Dendritic cell treated with granulocyte-macrophage colony-stimulating factor and Interleukin-4, amounts not matched to agents 40 ng/mL and 50 ng/mL, for 4 days (primary cell): ENCODE measurements at regions of chr7 and their contacts with region 1.

Region 1: DNA sequence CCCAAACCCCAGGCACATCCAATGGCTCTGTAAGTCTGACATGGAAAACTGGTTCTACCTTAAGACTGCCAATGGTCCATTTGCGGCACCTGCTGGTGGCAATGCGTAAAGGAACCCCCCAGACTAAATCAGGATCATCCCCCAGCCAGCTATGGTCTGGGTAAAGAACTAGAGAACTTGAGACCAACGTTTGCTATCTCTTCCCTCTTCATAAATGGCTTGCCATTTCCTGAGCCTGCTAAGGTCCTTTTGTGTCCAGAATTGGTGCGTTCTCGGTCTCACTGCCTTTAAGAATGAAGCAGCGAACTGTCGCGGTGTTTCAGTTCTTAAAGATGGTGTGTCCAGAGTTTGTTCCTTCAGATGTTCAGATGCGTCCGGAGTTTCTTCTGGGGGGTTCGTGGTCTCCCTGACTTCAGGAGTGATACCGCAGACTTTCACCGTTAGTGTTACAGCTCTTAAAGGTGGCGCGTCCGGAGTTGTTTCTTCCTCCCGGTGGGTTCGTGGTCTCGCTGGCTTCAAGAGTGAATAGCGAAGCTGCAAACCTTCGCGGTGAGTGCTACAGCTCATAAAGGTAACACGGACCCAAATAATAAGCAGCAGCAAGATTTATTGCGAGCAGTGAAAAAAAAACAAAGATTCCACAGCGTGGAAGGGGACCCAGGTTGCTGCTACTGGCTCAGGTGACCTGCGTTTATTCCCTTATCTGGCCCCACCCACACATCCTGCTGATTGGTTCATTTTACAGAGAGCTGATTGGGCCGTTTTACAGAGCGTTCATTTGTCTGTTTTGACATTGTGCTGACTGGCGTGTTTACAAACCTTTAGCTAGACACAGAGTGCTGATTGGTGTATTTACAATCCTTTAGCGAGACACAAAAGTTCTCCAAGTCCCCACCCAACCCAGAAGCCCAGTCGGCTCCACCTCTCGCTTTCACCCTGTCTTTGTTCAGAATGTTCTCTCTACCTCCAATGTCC is 95.4 kb downstream of the ELMO1 start:
- H3K4me3 Mint-ChIP-seq: peak overlapping the region; percentile 53
- H3K27ac Mint-ChIP-seq: peak overlapping the region; percentile 86
- H3K4me1 Mint-ChIP-seq: peaks cover 97% of the 10 kb centered on the region
- H3K27me3 Mint-ChIP-seq: no peaks in the 10 kb centered on the region

Region 2: DNA sequence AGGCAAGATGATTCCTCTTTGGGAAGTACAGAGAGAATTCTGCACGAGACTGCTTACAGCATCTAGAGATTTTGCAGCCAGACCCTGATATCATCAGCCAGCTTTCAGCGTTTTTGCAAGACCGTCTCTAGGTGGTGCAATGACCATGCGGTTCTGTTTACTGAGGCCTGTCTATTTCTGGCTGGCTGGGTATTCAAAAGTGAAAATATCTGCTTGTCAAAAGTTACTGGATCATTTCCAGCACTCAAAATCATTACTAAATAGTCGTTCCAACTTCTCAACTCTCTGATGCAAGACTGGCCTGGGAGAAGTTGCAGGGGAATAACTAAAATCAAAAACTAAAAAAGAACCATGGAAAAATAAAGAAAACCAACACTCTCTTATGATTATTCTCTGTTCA is 144.7 kb before region 1 on chr7:
- intact Hi-C with region 1: loop called (anchors 2 kb)
- H3K4me3 Mint-ChIP-seq: no peak overlapping the region
- H3K27ac Mint-ChIP-seq: no peak overlapping the region
- H3K4me1 Mint-ChIP-seq: peaks cover 12% of the 10 kb centered on the region
- H3K27me3 Mint-ChIP-seq: no peaks in the 10 kb centered on the region

Region 3: GRCh38 chr7:37234928-37235327 is 118.3 kb before region 1 on chr7:
- intact Hi-C with region 1: loop called (anchors 10 kb)
- H3K4me3 Mint-ChIP-seq: no peak overlapping the region
- H3K27ac Mint-ChIP-seq: no peak overlapping the region
- H3K4me1 Mint-ChIP-seq: peaks cover 15% of the 10 kb centered on the region
- H3K27me3 Mint-ChIP-seq: no peaks in the 10 kb centered on the region

Region 4: DNA sequence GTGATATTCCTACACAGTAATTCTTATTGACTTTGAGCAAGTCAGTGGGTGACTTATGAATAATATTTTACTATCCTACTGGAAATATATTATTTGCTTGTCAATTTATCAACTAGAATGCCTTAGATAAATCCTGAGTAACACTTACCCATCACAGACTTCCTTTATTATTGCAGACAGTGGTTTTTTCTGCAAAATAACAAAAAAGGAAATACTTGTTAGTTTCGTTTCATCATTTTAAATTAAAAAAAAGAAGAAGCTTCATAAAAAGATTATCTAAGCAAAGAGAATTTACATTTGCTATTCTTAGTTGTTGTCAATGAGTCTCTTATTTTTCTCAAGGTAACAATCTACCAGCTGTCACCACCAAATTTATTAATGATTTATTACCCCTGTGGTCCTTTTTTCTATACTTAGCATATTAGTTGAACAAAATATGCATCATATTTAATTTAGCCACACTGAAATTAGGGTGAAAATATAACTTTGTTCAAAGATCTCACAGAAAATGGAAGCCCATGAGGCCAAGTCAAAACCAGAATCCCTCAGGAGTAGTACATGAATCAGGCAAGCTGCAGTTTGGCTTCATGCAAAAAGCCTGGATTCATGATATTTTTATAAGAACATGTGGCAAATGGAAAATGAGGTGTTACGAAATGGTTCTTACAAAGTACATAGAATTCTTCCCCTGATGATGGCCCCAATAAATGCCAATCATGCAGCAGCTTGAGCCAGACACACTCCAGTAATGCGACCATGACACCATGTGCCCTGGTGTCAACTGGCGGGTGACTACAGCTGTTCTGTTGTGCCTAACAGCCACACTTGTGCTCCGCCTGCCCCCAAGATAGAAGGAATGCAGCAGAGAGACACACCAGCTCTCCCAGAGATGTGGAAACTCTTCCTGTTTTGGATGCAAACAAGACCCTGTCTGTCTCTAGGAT is 37.2 kb before region 1 on chr7:
- intact Hi-C with region 1: loop called (anchors 5 kb)
- H3K4me3 Mint-ChIP-seq: no peak overlapping the region
- H3K27ac Mint-ChIP-seq: peak overlapping the region; percentile 67
- H3K4me1 Mint-ChIP-seq: peaks cover 42% of the 10 kb centered on the region
- H3K27me3 Mint-ChIP-seq: no peaks in the 10 kb centered on the region

Region 5: GRCh38 chr7:37391791-37392672 is 38.8 kb after region 1 on chr7:
- intact Hi-C with region 1: loop called (anchors 5 kb)
- H3K4me3 Mint-ChIP-seq: peak overlapping the region; percentile 57
- H3K27ac Mint-ChIP-seq: peak overlapping the region; percentile 89
- H3K4me1 Mint-ChIP-seq: peaks cover 81% of the 10 kb centered on the region
- H3K27me3 Mint-ChIP-seq: no peaks in the 10 kb centered on the region